Activated naive CD4-positive, alpha-beta T cell treated with anti-CD3 and anti-CD28 coated beads for 36 hours (primary cell): ENCODE measurements at regions of chr6 and their contacts with region 1.

Region 1: GRCh38 chr6:129774697-129775447 is 64.9 kb upstream of the ARHGAP18 start:
- DNase-seq: peak; percentile 68
- H3K4me3 Mint-ChIP-seq: no peak overlapping the region
- H3K27ac Mint-ChIP-seq: no peak overlapping the region
- H3K4me1 Mint-ChIP-seq: peaks cover 3% of the 10 kb centered on the region
- H3K27me3 Mint-ChIP-seq: no peaks in the 10 kb centered on the region

Region 2: DNA sequence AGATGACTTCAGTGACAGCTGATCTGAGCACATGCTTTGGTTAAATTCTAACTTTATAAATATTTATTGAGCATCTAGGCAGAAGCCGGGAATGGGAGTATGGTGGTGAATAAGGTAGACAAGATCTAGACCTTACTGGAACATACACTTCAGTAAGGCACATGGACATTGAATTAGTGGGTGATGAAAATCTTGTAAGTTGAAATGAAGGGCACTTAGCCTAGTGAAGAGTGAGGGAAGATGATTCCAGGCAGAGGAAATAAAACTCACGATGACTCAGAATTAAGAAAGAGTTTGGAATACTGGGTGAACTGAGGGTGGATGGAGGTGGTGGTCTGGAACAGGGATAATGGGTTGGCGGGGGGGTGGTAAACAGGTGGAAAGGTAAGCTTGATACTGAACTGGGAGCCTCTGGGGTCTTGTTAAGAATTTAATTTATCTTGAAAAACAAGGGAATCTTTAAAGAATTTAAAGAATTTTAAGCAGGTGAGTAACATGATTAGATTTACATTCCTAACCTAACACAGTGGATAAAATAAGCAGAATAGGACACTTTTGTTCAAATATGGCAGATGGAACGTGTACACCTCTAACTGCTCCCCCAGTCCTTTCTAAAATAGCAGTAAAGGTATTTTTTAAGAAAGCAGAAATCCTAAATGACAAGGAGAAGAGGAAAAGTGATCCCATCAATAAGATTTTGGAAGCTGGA is 10.3 kb after region 1 on chr6:
- CTCF ChIA-PET with region 1: interaction called, 21 read pairs
- intact Hi-C with region 1: no loop called
- DNase-seq: no peak
- H3K4me3 Mint-ChIP-seq: no peak overlapping the region
- H3K27ac Mint-ChIP-seq: no peak overlapping the region
- H3K4me1 Mint-ChIP-seq: no peaks in the 10 kb centered on the region
- H3K27me3 Mint-ChIP-seq: no peaks in the 10 kb centered on the region

Region 3: DNA sequence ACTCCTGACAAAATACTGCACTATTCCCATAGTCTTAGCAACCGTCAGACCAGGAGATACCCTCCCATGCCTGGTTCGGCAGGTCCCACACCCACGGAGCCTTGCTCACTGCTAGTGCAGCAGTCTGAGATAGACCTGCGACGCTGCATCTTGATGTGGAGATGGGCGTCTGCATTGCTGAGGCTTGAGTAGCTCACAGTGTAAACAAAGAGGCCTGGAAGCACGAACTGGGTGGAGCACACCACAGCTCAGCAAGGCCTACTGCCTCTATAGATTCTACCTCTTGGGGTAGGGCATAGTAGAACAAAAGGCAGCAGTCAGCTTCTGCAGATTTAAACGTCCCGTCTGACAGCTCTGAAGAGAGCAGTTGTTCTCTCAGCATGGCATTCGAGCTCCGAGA is 60.8 kb after region 1 on chr6:
- CTCF ChIA-PET with region 1: no interaction called
- intact Hi-C with region 1: no loop called
- DNase-seq: no peak
- H3K4me3 Mint-ChIP-seq: no peak overlapping the region
- H3K27ac Mint-ChIP-seq: no peak overlapping the region
- H3K4me1 Mint-ChIP-seq: no peaks in the 10 kb centered on the region
- H3K27me3 Mint-ChIP-seq: peaks cover 2% of the 10 kb centered on the region

Region 4: DNA sequence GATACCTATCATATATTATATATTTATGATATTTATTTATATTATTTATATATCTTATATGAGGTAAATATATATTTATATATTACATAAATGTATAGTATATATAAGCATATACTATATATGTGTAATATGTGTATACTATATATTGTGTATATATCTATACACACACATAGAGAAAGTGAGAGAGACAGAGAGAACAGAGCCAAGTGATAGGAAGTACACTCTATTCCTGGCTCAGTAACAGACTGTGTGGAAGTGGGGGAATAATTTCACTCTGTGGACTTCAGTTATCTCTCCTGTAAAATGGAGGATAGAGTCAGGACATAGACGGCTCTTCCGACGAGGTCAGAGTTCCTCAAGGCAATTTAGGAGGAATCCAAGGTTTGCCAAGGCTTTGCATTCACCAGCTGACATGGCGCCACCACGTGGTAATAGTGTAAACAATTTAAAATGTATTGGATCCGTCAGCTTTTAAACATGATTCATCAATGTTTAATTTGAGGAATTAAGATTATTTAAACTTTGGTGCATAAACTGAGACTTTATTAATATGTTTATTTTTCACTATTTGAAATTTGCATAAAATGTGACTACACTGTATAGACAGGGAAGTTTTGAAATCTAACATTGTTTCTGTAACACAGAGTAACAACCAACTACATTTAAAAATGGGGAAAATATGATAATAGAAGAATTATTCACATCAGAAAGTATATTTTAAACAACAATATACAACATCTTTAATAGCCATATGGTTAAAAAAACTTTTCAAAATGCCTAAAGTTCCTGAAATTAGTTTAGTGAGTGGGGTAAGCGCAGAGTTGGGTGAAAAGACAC is 161.7 kb after region 1 on chr6:
- CTCF ChIA-PET with region 1: interaction called, 3 read pairs
- intact Hi-C with region 1: loop called (anchors 5 kb)
- DNase-seq: peak; percentile 63
- H3K4me3 Mint-ChIP-seq: no peak overlapping the region
- H3K27ac Mint-ChIP-seq: no peak overlapping the region
- H3K4me1 Mint-ChIP-seq: peaks cover 2% of the 10 kb centered on the region
- H3K27me3 Mint-ChIP-seq: peaks cover 3% of the 10 kb centered on the region

Region 5: DNA sequence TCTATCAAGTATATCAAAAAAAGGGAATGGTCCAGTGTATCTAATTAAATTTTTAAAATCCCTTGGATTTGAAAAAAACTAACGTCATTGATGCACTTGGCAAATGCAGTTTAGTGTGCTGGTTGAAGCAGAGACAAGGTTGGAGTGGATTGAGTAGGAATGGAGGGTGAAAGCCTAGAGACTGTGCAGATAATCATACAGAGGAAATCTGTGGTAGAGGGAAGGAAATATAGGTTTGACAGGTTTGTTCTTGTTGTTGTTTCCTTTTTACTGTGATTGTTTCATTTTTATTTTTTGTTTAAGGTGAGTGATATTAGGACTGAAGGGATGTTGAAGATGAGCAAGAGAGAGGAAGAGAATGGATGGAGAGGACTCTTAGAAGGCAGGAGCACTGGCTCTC is 214.5 kb after region 1 on chr6:
- CTCF ChIA-PET with region 1: no interaction called
- intact Hi-C with region 1: no loop called
- DNase-seq: no peak
- H3K4me3 Mint-ChIP-seq: no peak overlapping the region
- H3K27ac Mint-ChIP-seq: no peak overlapping the region
- H3K4me1 Mint-ChIP-seq: peaks cover 5% of the 10 kb centered on the region
- H3K27me3 Mint-ChIP-seq: no peaks in the 10 kb centered on the region